ENCODE measurements at regions of chr3 and their contacts with region 1.

Region 1: DNA sequence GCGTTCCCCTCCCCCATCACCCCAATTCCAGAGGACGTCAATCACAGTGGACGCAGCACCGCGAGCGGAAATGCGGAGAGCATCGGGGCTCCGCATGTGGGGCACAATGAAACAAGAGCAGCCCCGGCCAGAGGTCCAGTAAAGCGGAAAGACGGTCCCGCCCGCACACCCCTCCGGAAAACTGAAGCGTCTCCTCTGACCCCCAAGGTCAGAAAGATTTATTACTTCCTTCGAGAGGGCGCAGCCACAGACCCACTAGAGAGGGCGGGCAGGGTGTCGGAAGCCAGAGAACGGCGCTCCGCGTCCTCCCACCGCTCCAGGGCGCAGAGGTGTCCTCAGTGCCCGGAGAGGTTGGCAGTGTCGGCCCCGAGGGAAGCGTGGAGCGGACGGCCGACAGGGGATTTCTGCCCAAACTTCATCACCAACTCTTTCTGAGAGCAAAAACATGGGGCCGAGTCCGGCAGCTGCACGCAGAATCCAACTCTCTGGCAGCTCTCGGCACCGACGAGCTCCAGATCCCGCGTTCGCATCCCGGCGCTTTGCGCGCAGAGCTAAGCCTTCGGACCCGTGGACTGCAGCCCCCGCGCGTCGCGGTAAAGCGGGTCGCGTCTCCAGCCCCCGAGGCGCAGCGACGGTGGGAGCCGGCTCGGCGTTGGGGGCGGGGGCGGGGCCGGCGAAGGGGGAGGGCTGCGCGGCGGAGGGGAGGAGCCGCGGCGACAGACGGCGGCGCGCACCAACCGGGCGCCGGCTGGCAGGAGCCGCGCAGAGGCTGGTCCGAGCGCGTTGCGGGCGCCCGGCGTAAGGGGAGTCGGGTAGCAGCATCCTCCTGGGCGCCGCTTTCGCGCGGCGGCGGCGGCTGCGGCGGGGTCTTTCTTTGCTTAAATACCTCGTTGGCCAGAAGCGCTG is at the start of gene CHST2:
- DNase-seq: peak; percentile 28 to 85 (median 66)
- ATAC-seq: peak; percentile 74
- H3K4me3 ChIP-seq: peak within 1 kb of the TSS; percentile 88 to 90
- H3K4me3 Mint-ChIP-seq: peak within 1 kb of the TSS; percentile 88
- H3K27ac ChIP-seq: peak within 1 kb of the TSS; percentile 54 to 56
- H3K27ac Mint-ChIP-seq: peak within 1 kb of the TSS; percentile 75
- H3K4me1 ChIP-seq: peaks cover 37% of the 10 kb centered on the region
- H3K4me1 Mint-ChIP-seq: peaks cover 32% of the 10 kb centered on the region
- H3K27me3 ChIP-seq: no peaks in the 10 kb centered on the region
- H3K27me3 Mint-ChIP-seq: no peaks in the 10 kb centered on the region
- CTCF ChIP-seq: no peak
- total RNA-seq, gene CHST2: 2.5 to 2.7 TPM

Region 2: DNA sequence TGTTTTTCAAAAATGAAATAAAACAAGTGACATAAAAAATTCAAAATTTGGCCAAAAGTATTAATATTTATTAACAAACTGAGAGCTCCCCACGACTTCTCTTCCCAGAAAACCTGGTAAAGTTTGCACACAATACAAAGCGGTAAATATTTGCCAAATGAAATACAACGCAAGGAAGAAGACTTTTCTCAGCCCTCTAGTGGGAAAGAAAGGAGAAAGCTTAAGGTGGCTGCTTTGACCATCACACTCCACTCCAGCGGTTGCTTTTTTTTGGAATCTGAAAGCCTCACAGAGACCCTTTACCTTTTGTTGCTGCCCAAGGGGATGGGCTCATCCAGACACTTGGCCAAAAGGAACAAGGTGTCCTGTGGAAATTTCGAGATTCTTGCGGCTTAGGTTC is 892.8 kb before region 1 on chr3:
- CTCF ChIA-PET with region 1: no interaction called
- POLR2A ChIA-PET with region 1: no interaction called
- intact Hi-C with region 1: loop called in 1 of 2 experiments (anchors 10 kb)
- DNase-seq: no peak
- ATAC-seq: no peak
- H3K4me3 ChIP-seq: no peak overlapping the region
- H3K4me3 Mint-ChIP-seq: peak overlapping the region; percentile 62
- H3K27ac ChIP-seq: no peak overlapping the region
- H3K27ac Mint-ChIP-seq: no peak overlapping the region
- H3K4me1 ChIP-seq: peaks cover 4% of the 10 kb centered on the region
- H3K4me1 Mint-ChIP-seq: peaks cover 17% of the 10 kb centered on the region
- H3K27me3 ChIP-seq: no peaks in the 10 kb centered on the region
- H3K27me3 Mint-ChIP-seq: no peaks in the 10 kb centered on the region
- CTCF ChIP-seq: no peak

Region 3: DNA sequence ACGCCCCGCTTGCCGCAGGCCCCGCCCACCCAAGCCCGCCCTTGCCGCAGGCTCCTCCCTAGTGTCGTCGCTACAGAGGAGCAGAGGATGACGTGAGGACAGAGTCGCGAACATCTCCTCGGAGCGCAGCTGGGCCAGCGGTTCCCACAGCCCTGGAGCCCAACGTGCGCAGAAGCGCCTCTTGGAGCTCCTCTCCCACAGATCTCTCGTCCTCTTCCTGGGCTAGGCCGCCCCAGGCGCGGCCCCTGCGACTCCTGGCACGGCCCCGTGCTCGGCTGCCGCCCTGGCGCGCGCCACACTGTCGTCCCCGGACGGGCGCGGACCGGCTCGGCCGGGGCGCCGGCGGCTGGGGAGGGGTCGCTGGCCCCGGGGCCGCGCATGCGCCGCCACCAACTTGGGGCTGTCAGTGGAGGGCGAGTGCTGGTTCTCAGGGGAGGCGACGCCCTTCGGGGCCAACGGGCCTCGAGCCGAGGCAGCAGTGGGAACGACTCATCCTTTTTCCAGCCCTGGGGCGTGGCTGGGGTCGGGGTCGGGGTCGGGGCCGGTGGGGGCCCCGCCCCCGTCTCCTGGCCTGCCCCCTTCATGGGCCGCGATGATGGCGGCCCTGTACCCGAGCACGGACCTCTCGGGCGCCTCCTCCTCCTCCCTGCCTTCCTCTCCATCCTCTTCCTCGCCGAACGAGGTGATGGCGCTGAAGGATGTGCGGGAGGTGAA is 395.1 kb before region 1 on chr3 and contains the start of gene TRPC1:
- CTCF ChIA-PET with region 1: no interaction called
- POLR2A ChIA-PET with region 1: no interaction called
- intact Hi-C with region 1: loop called in 1 of 2 experiments (anchors 5 kb)
- DNase-seq: peak; percentile 2 to 93 (median 70)
- ATAC-seq: peak; percentile 96
- H3K4me3 ChIP-seq: peak within 1 kb of the TSS; percentile 54 to 63
- H3K4me3 Mint-ChIP-seq: peak within 1 kb of the TSS; percentile 91
- H3K27ac ChIP-seq: peak within 1 kb of the TSS in 1 of 2 experiments; percentile 63
- H3K27ac Mint-ChIP-seq: peak within 1 kb of the TSS; percentile 92
- H3K4me1 ChIP-seq: peaks cover 9% of the 10 kb centered on the region
- H3K4me1 Mint-ChIP-seq: peaks cover 20% of the 10 kb centered on the region
- H3K27me3 ChIP-seq: peaks cover 0 to 3% of the 10 kb centered on the region in 2 experiments
- H3K27me3 Mint-ChIP-seq: peaks cover 28% of the 10 kb centered on the region
- CTCF ChIP-seq: no peak
- total RNA-seq, gene TRPC1: 3.3 to 3.4 TPM

Region 4: GRCh38 chr3:143171141-143171970 is 52.1 kb after region 1 on chr3:
- CTCF ChIA-PET with region 1: interaction called, 4 read pairs
- POLR2A ChIA-PET with region 1: no interaction called
- intact Hi-C with region 1: loop called in 1 of 2 experiments (anchors 2 kb)
- DNase-seq: peak in 2 of 9 experiments; percentile 33 to 58
- ATAC-seq: peak; percentile 70
- H3K4me3 ChIP-seq: no peak overlapping the region
- H3K4me3 Mint-ChIP-seq: peak overlapping the region; percentile 59
- H3K27ac ChIP-seq: peak overlapping the region; percentile 12 to 70
- H3K27ac Mint-ChIP-seq: peak overlapping the region; percentile 88
- H3K4me1 ChIP-seq: peaks cover 55% of the 10 kb centered on the region
- H3K4me1 Mint-ChIP-seq: peaks cover 78% of the 10 kb centered on the region
- H3K27me3 ChIP-seq: no peaks in the 10 kb centered on the region
- H3K27me3 Mint-ChIP-seq: no peaks in the 10 kb centered on the region
- CTCF ChIP-seq: no peak

Region 5: DNA sequence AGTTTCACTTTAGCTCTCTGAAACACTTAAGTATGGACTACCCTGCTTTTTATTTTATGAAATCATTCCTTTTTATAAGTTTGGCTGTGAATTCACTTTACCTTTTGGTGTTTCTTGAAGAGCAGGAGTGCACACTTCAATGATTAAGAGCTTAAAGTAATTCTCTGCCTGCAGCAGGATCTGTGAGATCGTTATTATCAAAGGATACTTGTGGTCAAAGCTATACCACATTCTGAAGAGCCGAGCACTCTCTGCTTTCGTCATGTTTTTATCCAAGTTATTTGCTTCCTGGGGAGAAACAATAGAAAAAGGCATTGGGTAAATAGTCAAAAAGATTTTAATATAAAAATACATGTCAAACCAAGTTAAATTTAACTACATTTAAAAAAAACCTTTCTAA is 244.0 kb after region 1 on chr3:
- CTCF ChIA-PET with region 1: interaction called, 5 read pairs
- POLR2A ChIA-PET with region 1: no interaction called
- intact Hi-C with region 1: loop called in 1 of 2 experiments (anchors 5 kb)
- DNase-seq: peak in 2 of 9 experiments; percentile 2 to 36
- ATAC-seq: no peak
- H3K4me3 ChIP-seq: no peak overlapping the region
- H3K4me3 Mint-ChIP-seq: peak overlapping the region; percentile 27
- H3K27ac ChIP-seq: no peak overlapping the region
- H3K27ac Mint-ChIP-seq: peak overlapping the region; percentile 12
- H3K4me1 ChIP-seq: peaks cover 18% of the 10 kb centered on the region
- H3K4me1 Mint-ChIP-seq: peaks cover 22% of the 10 kb centered on the region
- H3K27me3 ChIP-seq: no peaks in the 10 kb centered on the region
- H3K27me3 Mint-ChIP-seq: no peaks in the 10 kb centered on the region
- CTCF ChIP-seq: no peak

Region 6: GRCh38 chr3:143751643-143752178 is 632.4 kb after region 1 on chr3:
- CTCF ChIA-PET with region 1: interaction called, 3 read pairs
- POLR2A ChIA-PET with region 1: interaction called, 4 read pairs
- intact Hi-C with region 1: loop called in 1 of 2 experiments (anchors 5 kb)
- DNase-seq: peak in 8 of 9 experiments; percentile 4 to 70 (median 26)
- ATAC-seq: peak; percentile 87
- H3K4me3 ChIP-seq: peak overlapping the region; percentile 7 to 11
- H3K4me3 Mint-ChIP-seq: peak overlapping the region; percentile 68
- H3K27ac ChIP-seq: peak overlapping the region; percentile 59 to 61
- H3K27ac Mint-ChIP-seq: peak overlapping the region; percentile 95
- H3K4me1 ChIP-seq: peaks cover 34% of the 10 kb centered on the region
- H3K4me1 Mint-ChIP-seq: peaks cover 44% of the 10 kb centered on the region
- H3K27me3 ChIP-seq: no peaks in the 10 kb centered on the region
- H3K27me3 Mint-ChIP-seq: no peaks in the 10 kb centered on the region
- CTCF ChIP-seq: no peak

Measured in CD8-positive, alpha-beta T cell (primary cell).